Ovary (tissue), 10 donors: ENCODE measurements at regions of chr10 and their contacts with region 1.

Region 1: DNA sequence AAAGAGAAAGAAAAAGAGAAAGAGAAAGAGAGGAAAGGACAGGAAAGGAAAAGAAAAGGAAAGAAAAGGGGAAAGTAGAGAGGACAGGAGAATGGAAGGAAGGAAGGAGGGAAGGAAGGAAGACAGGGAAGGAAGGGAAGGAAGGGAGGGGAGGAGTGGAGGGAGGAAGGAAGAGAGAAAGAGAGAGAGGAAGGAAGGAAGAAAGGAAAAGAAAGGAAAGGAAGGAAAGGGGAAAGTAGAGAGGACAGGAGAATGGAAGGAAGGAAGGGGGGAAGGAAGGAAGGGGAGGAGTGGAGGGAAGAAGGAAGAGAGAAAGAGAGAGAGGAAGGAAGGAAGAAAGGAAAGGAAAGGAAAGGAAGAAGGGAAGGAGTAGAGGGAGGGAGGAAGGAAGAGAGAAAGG is 96.4 kb upstream of the APBB1IP start:
- DNase-seq: no peak
- H3K4me3 ChIP-seq: no peak overlapping the region
- H3K27ac ChIP-seq: no peak overlapping the region
- H3K4me1 ChIP-seq: no peaks in the 10 kb centered on the region
- H3K27me3 ChIP-seq: no peaks in the 10 kb centered on the region
- CTCF ChIP-seq: no peak
- EP300 ChIP-seq: no peak
- POLR2A ChIP-seq: no peak

Region 2: GRCh38 chr10:27134371-27134770 is 792.7 kb after region 1 on chr10:
- intact Hi-C with region 1: loop called in 1 of 4 experiments (anchors 10 kb)
- DNase-seq: no peak
- H3K4me3 ChIP-seq: no peak overlapping the region
- H3K27ac ChIP-seq: no peak overlapping the region
- H3K4me1 ChIP-seq: no peaks in the 10 kb centered on the region
- H3K27me3 ChIP-seq: no peaks in the 10 kb centered on the region
- CTCF ChIP-seq: no peak
- EP300 ChIP-seq: no peak
- POLR2A ChIP-seq: no peak